ENCODE measurements at regions of chr1 and their contacts with region 1.

Region 1: GRCh38 chr1:95072532-95073419 is at the start of gene ALG14:
- DNase-seq: peak; percentile 95
- H3K4me3 Mint-ChIP-seq: peak within 1 kb of the TSS; percentile 86
- H3K27ac Mint-ChIP-seq: peak within 1 kb of the TSS; percentile 85
- H3K4me1 Mint-ChIP-seq: peaks cover 18% of the 10 kb centered on the region
- H3K27me3 Mint-ChIP-seq: peaks cover 5% of the 10 kb centered on the region

Region 2: DNA sequence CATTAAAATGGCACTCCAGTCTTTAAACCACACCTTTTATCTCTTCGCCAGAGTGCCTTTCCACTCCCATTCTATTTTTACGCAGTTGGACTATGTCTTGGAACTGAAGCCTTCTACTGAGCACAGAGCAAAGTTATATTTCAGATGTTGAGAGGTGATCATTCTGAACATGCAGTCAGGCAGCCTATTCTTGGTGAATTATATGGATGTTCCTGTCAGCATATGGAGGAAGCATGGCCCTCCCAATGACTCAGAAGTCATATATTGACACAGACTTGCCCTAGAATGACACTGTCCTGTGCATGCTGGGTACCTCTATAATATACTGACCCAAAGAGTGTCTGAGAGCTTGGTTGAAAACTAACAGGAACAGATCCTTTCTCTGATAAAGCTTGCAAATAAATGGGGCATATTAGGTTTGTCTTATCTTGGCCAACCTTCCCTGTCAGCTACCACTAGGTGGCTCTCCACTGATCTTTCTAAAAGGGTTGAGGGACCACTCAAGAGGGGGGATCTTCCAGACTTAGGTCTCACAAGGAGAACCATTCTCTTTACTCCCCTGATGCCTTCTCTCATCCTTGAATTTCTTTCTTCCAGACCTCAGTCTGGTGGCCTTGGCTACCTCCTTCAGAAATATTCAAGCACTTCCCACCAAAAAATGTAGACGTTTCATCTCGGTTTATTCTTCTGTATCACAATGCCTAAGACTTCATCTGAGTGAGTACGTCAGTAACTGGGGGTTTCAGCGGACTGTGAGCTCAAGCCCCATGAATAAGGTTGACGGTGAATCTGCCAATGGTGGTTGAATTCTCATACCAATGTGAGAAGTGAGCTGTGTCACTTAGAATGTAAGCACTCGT is 11.8 kb after region 1 on chr1:
- CTCF ChIA-PET with region 1: interaction called, 14 read pairs
- DNase-seq: peak; percentile 30
- H3K4me3 Mint-ChIP-seq: no peak overlapping the region
- H3K27ac Mint-ChIP-seq: no peak overlapping the region
- H3K4me1 Mint-ChIP-seq: no peaks in the 10 kb centered on the region
- H3K27me3 Mint-ChIP-seq: peaks cover 23% of the 10 kb centered on the region

Region 3: GRCh38 chr1:95226781-95227660 is 154.2 kb after region 1 on chr1:
- CTCF ChIA-PET with region 1: no interaction called
- DNase-seq: no peak
- H3K4me3 Mint-ChIP-seq: no peak overlapping the region
- H3K27ac Mint-ChIP-seq: no peak overlapping the region
- H3K4me1 Mint-ChIP-seq: no peaks in the 10 kb centered on the region
- H3K27me3 Mint-ChIP-seq: peaks cover 10% of the 10 kb centered on the region